ENCODE measurements at regions of chr13 and their contacts with region 1.

Region 1: GRCh38 chr13:39602614-39603366 is at the start of gene LHFPL6:
- DNase-seq: peak; percentile 40 to 67
- H3K4me3 ChIP-seq: peak within 1 kb of the TSS; percentile 70
- H3K27ac ChIP-seq: no peak within 1 kb of the TSS
- H3K4me1 ChIP-seq: peaks cover 6% of the 10 kb centered on the region; the same call in 1 of the 2 replicates
- H3K27me3 ChIP-seq: no peaks in the 10 kb centered on the region
- CTCF ChIP-seq: peak; percentile 54; the same call in 1 of the 2 replicates
- total RNA-seq, gene LHFPL6: 2.5 and 3.1 TPM in 2 replicates

Region 2: GRCh38 chr13:39273953-39274738 is 328.6 kb before region 1 on chr13:
- CTCF ChIA-PET with region 1: interaction called, 3 read pairs
- POLR2A ChIA-PET with region 1: no interaction called
- intact Hi-C with region 1: loop called (anchors 2 kb)
- DNase-seq: peak in 1 of 2 experiments; percentile 12
- H3K4me3 ChIP-seq: no peak overlapping the region
- H3K27ac ChIP-seq: no peak overlapping the region
- H3K4me1 ChIP-seq: no peaks in the 10 kb centered on the region
- H3K27me3 ChIP-seq: no peaks in the 10 kb centered on the region; the same call in 1 of the 2 replicates
- CTCF ChIP-seq: no peak

Region 3: GRCh38 chr13:40401911-40402776 is 799.4 kb after region 1 on chr13:
- CTCF ChIA-PET with region 1: no interaction called
- POLR2A ChIA-PET with region 1: no interaction called
- intact Hi-C with region 1: no loop called
- DNase-seq: peak; percentile 88 to 91
- H3K4me3 ChIP-seq: peak overlapping the region; percentile 21; the same call in 1 of the 2 replicates
- H3K27ac ChIP-seq: peak overlapping the region; percentile 71
- H3K4me1 ChIP-seq: peaks cover 62% of the 10 kb centered on the region
- H3K27me3 ChIP-seq: no peaks in the 10 kb centered on the region
- CTCF ChIP-seq: no peak

Measured in PC-9 (cell line).